Left cardiac atrium (tissue), 4 donors: ENCODE measurements at regions of chr19 and their contacts with region 1.

Region 1: GRCh38 chr19:11587302-11587974 is 9.8 kb upstream of the ZNF627 start:
- DNase-seq: peak; percentile 79
- ATAC-seq: peak; percentile 88 to 89

Region 2: DNA sequence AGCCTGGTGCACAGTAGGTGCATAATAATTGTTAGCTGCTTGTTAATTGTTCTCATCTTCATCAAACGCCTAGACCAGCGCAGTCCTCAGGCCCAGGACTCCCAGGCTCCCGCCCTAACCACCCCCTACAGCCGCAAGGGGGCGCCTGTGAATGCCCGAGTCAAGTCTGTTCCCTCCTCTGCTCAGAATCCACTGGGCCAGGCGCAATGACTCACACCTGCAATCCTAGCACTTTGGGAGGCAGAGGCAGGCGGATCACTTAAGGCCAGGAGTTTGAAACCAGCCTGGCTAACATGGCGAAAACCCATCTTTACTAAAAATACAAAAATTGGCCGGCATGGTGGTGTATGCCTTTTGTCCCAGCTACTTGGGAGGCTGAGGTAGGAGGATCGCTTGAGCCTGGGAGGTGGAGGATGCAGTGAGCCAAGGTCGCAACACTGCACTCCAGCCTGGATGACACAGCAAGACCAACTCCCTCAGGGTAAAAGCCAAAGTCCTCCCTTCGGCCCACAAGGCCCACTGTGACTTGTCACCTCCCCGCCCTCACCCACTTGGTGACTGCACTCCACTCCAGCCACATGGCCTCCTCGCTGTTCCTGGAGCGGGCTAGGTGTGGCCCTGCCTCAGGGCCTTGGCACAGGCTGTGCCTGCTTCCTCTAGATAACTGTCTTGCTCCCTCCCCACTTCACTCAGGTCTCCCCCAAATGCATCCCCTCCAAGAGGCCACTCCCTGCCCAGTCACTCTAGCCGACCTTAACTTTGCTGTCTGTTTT is 90.9 kb before region 1 on chr19:
- intact Hi-C with region 1: loop called in 1 of 2 experiments (anchors 1 kb)
- DNase-seq: peak; percentile 72
- ATAC-seq: peak; percentile 51 to 75